Esophagus muscularis mucosa (tissue), 4 donors: ENCODE measurements at regions of chrX and their contacts with region 1.

Region 1: DNA sequence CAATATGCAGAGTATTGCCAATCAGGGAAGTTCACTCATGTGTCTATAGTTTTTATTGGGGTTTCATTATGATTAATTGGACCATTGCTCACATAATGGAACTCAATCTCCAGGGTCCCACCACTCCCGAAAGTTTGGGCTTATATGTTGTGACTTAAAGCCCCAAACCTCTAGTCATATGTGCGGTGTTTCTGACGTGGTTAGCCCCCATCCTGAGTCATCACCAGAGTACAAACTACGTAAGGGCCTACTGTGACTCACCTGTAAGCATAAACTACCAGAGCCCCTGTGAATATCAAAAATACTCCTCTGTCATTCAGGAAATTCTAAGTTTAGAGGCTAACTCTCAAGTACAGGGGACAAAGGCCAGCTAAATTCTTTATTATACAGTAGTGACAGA is 5.4 kb downstream of the YIPF6 start:
- DNase-seq: no peak
- H3K4me3 ChIP-seq: no peak overlapping the region
- H3K27ac ChIP-seq: no peak overlapping the region
- H3K4me1 ChIP-seq: peaks cover 10 to 30% (median 21%) of the 10 kb centered on the region in 4 donors
- H3K27me3 ChIP-seq: no peaks in the 10 kb centered on the region
- CTCF ChIP-seq: no peak
- EP300 ChIP-seq: no peak
- POLR2A ChIP-seq: no peak

Region 2: GRCh38 chrX:68710870-68711576 is 206.8 kb after region 1 on chrX:
- intact Hi-C with region 1: loop called (anchors 10 kb)
- DNase-seq: no peak
- H3K4me3 ChIP-seq: no peak overlapping the region
- H3K27ac ChIP-seq: no peak overlapping the region
- H3K4me1 ChIP-seq: peaks cover 0 to 5% (median 4%) of the 10 kb centered on the region in 4 donors
- H3K27me3 ChIP-seq: no peaks in the 10 kb centered on the region
- CTCF ChIP-seq: peak; percentile 22 to 42 (median 24)
- EP300 ChIP-seq: no peak
- POLR2A ChIP-seq: no peak